ENCODE measurements at regions of chr6 and their contacts with region 1.

Region 1: GRCh38 chr6:30500421-30501355 is 11.4 kb downstream of the HLA-E start:
- DNase-seq: peak in 1 of 2 donors; percentile 42
- ATAC-seq: peak; percentile 49 to 89 (median 80)
- H3K4me3 ChIP-seq: peak overlapping the region in 2 of 10 donors; percentile 2 to 20
- H3K27ac ChIP-seq: peak overlapping the region; percentile 28 to 87 (median 77)
- H3K4me1 ChIP-seq: peaks cover 0 to 40% (median 9%) of the 10 kb centered on the region in 9 donors
- H3K27me3 ChIP-seq: peaks cover 0 to 2% (median 0%) of the 10 kb centered on the region in 7 donors
- CTCF ChIP-seq: no peak

Region 2: DNA sequence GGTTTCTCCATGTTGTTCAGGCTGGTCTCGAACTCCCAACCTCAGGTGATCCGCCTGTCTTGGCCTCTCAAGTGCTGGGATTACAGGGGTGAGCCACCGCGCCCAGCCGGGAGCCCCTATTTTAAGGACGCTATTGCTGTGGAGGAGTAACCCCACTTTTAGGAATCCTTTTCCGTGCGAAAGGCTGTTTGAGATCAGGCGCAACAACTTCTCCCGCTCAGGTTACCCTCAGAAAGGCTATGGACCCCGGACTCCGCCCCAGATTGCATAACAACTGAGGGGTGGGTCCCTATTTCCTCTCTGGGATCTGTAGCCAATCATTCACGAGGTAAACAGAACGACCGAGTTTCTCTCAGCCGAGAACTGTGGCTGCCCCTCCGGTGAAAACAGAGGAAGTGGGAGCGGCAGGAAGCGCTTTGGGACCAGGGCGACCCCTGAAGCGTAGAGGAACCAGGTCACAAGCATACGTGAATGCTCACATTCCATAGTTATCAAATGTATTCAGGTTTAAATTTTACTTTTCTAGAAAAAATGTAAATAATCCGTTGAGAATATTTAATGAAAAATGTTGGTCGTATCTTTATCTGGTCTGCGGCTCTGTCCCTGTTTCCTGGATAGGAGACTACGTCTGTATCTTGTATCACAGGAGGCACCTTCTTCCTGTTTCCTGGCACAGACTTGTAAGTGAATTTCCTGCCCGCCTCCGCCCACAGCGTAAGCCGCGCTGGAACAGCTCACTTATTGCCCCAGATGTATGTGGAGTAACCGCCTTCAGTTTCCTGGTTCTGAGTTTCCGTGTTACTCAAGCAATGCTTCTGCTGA is 15.5 kb after region 1 on chr6:
- intact Hi-C with region 1: loop called in 1 of 10 experiments (anchors 2 kb)
- DNase-seq: peak; percentile 84 to 94
- ATAC-seq: peak; percentile 94 to 98 (median 96)
- H3K4me3 ChIP-seq: peak overlapping the region; percentile 23 to 65 (median 48)
- H3K27ac ChIP-seq: peak overlapping the region; percentile 71 to 98 (median 92)
- H3K4me1 ChIP-seq: peaks cover 0 to 29% (median 7%) of the 10 kb centered on the region in 9 donors
- H3K27me3 ChIP-seq: no peaks in the 10 kb centered on the region
- CTCF ChIP-seq: no peak